CD4-positive, alpha-beta memory T cell (primary cell): ENCODE measurements at regions of chr10 and their contacts with region 1.

Region 1: GRCh38 chr10:102009801-102010425 is 46.1 kb downstream of the ARMH3 start:
- DNase-seq: peak; percentile 48 to 61 (median 53)
- H3K4me3 ChIP-seq: no peak overlapping the region
- H3K4me3 Mint-ChIP-seq: no peak overlapping the region
- H3K27ac ChIP-seq: no peak overlapping the region
- H3K27ac Mint-ChIP-seq: peak overlapping the region in 4 of 7 donors; percentile 3 to 67 (median 38)
- H3K4me1 ChIP-seq: no peaks in the 10 kb centered on the region
- H3K4me1 Mint-ChIP-seq: peaks cover 0 to 5% (median 4%) of the 10 kb centered on the region in 4 donors
- H3K27me3 ChIP-seq: no peaks in the 10 kb centered on the region
- H3K27me3 Mint-ChIP-seq: no peaks in the 10 kb centered on the region

Region 2: DNA sequence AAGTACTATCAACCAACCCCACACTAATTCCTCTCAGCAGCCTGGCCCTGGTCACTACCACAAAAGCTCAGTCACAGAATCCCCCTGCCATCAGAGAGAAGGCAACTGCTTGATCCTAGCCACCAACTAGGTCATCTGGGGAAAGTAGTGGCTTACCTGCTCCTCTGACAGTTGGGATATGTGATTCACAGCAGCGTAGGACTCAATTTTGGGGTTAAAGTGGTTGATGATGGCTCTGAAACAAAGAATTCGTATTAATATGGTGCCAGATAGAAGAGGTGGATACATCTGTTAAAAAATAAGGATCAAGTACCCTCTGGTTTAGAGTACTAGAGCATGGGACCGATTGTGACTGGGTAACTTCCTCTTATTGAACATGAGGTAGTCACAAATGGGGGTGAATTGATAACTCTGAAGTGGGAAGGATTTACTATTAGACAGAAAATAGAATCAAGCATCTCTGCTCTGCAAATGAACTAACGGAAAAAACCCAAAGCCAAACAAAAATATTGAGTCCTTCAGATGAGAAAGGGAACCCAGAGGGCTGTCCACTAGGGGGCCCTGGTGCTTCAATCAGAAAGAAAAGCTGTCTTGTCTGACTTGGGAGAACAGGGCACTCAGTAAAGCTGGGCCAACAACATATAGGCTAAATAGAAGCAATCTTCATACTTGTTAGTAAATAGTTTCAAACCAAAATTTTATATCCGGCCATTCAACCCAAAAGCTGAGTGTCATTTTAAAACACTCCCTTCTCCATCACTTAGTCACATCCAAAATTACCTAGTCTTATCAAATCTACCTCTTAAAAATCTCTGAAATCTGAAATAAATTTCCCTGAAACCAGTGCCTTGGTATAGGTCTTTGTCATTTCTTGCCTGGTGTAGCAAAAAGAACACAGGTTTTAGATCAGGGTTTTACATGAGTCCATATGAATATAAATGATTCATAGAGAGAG is 120.4 kb before region 1 on chr10:
- CTCF ChIA-PET with region 1: interaction called, 15 read pairs
- POLR2A ChIA-PET with region 1: no interaction called
- intact Hi-C with region 1: loop called (anchors 1 kb)
- DNase-seq: peak; percentile 42 to 61 (median 52)
- H3K4me3 ChIP-seq: no peak overlapping the region
- H3K4me3 Mint-ChIP-seq: no peak overlapping the region
- H3K27ac ChIP-seq: no peak overlapping the region
- H3K27ac Mint-ChIP-seq: peak overlapping the region in 3 of 7 donors; percentile 3 to 5 (median 3)
- H3K4me1 ChIP-seq: no peaks in the 10 kb centered on the region
- H3K4me1 Mint-ChIP-seq: peaks cover 0 to 4% (median under 1%) of the 10 kb centered on the region in 4 donors
- H3K27me3 ChIP-seq: no peaks in the 10 kb centered on the region
- H3K27me3 Mint-ChIP-seq: no peaks in the 10 kb centered on the region

Region 3: GRCh38 chr10:102020938-102021337 is 11.0 kb after region 1 on chr10:
- CTCF ChIA-PET with region 1: interaction called, 31 read pairs
- POLR2A ChIA-PET with region 1: no interaction called
- intact Hi-C with region 1: no loop called
- DNase-seq: no peak
- H3K4me3 ChIP-seq: no peak overlapping the region
- H3K4me3 Mint-ChIP-seq: no peak overlapping the region
- H3K27ac ChIP-seq: no peak overlapping the region
- H3K27ac Mint-ChIP-seq: no peak overlapping the region
- H3K4me1 ChIP-seq: no peaks in the 10 kb centered on the region
- H3K4me1 Mint-ChIP-seq: peaks cover 0 to 4% (median 2%) of the 10 kb centered on the region in 4 donors
- H3K27me3 ChIP-seq: no peaks in the 10 kb centered on the region
- H3K27me3 Mint-ChIP-seq: no peaks in the 10 kb centered on the region

Region 4: DNA sequence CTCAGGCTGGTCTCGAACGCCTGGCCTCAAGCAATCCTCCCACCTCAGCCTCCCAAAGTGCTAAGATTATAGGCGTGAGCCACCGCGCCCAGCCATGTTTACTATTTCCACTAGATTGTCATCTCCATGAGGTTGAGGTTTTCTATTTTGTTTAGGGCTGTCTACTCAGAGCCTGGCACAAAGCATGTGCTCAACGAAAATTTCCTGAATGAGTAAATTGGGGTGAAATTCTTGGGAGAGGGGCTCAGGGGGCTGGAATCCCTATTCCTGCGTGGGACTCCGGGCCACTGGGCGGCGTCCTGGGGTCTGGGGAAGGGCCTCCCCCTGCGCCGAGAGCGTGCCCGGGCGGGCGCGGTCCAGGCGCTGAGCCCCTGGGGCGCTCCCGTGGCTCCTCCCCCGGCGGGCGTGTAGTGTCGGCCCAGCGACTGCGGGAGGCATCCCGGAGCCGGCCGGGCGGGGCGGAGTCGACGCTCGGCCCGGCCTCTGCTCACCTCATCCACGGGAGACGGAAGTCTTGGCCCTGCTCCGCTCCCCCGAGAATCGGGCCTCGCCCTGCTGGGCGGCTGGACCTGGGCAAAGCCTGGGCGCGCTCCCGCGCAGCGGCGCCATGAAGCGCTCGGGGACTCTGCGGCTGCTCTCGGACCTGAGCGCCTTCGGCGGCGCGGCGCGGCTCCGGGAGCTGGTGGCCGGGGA is 55.1 kb after region 1 on chr10 and contains the start of gene HPS6:
- CTCF ChIA-PET with region 1: interaction called, 16 read pairs
- POLR2A ChIA-PET with region 1: no interaction called
- intact Hi-C with region 1: no loop called
- DNase-seq: peak; percentile 86 to 90 (median 88)
- H3K4me3 ChIP-seq: peak within 1 kb of the TSS; percentile 49 to 57
- H3K4me3 Mint-ChIP-seq: peak within 1 kb of the TSS; percentile 87 to 92 (median 88)
- H3K27ac ChIP-seq: peak within 1 kb of the TSS; percentile 90
- H3K27ac Mint-ChIP-seq: peak within 1 kb of the TSS; percentile 92 to 99 (median 96)
- H3K4me1 ChIP-seq: peaks cover 42% of the 10 kb centered on the region
- H3K4me1 Mint-ChIP-seq: peaks cover 19 to 39% (median 29%) of the 10 kb centered on the region in 4 donors
- H3K27me3 ChIP-seq: no peaks in the 10 kb centered on the region
- H3K27me3 Mint-ChIP-seq: no peaks in the 10 kb centered on the region
- total RNA-seq, gene HPS6: 25.1 to 27.9 TPM